ENCODE measurements at regions of chr19 and their contacts with region 1.

Region 1: GRCh38 chr19:4815426-4816201 is 15.9 kb downstream of the TICAM1 start:
- DNase-seq: no peak
- H3K4me3 ChIP-seq: no peak overlapping the region
- CTCF ChIP-seq: no peak

Region 2: DNA sequence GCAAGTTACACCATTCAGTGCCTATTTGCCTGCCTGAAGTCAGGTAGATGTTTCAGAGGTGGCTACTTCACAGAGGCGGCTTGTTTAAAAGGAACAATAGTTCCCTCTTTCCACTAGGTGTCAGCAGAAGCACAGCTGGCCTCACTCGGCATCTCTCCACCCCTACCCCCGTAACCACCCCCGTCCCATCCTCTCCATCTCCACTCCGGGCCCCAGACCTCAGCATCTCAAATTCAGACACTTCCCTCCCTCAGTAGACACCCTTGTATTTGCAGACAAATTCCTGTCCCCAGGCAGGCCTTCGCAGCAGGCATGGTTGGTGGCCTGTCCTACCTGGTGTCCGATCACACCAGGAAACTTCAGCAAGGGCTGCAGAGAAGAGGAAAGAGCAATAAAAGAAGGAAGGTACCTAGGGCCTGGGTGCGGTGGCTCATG is 82.9 kb before region 1 on chr19:
- CTCF ChIA-PET with region 1: interaction called, 37 read pairs
- POLR2A ChIA-PET with region 1: no interaction called
- DNase-seq: no peak
- H3K4me3 ChIP-seq: no peak overlapping the region; the same call in 1 of the 2 replicates
- CTCF ChIP-seq: peak; percentile 71

Region 3: DNA sequence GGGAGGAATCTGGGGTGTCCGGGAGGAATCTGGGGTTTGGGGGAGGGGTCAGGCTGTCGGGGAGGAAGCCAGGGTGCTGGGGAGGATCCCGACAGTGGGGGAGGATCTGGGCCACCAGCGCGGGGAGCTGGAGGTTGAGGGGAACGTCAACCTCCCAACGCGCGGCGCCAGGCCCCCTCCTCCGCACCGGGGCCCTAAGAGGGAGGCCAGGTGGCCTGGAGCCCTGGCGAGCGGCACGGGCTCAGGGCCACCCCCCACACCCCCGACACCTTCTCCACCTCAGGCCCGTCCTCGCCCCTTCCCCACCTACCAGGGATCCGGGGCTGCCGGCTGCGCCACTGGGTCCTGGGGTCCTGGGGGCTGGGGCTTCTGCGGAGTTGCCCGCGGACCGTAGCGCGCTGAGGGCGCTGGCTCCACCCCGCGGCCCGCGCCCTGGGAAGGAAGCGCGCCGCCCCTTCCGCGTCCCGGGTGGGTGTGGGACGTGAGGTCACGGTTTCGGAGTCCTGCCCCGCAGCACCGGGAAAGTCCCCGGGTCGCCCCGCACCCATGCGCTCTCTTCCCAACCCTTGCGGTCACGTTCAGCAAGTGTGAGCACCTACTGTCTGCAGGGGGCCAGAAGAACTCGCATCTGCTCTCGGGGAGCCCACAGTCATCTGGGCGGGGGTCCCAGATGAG is 15.8 kb after region 1 on chr19 and contains the start of gene TICAM1:
- CTCF ChIA-PET with region 1: interaction called, 23 read pairs
- POLR2A ChIA-PET with region 1: interaction called, 3 read pairs
- DNase-seq: no peak
- H3K4me3 ChIP-seq: peak within 1 kb of the TSS; percentile 76
- CTCF ChIP-seq: no peak

Region 4: DNA sequence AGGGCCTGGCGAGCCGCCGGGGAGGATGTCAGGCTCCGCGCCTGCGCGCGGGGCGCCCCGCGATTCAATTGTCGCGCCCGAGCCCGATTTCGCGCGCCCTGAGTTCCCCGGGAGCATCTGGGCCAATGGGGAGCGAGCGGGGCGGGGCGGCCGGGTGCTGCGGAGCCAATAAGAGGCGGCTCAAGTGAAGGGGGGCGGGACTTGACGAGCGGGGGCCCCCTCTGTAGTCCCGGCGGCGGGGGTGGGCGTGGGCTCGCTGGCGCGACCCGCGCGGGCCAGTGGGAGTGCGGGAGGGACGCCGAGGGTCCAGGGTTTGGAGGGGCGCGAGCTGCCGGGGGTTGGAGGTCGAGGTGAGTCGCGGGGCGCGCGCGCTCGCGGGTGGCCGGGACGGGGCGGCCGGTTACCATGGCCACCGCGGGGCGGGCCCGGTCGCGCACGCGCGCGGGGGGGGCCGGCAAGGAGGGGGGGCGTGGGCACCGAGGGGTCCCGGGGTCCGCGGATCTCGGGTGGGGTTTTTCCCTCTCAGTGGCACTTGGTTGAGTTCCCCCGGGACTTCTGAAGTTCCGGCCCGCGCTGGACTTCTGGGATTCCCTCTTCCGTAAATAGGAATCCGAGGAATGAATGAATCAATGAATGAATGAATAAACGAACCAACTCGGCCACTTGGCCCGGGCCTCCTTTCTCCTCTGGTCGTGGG is 94.4 kb after region 1 on chr19:
- CTCF ChIA-PET with region 1: interaction called, 243 read pairs
- POLR2A ChIA-PET with region 1: interaction called, 22 read pairs
- DNase-seq: no peak
- H3K4me3 ChIP-seq: peak overlapping the region; percentile 70
- CTCF ChIP-seq: no peak

Region 5: DNA sequence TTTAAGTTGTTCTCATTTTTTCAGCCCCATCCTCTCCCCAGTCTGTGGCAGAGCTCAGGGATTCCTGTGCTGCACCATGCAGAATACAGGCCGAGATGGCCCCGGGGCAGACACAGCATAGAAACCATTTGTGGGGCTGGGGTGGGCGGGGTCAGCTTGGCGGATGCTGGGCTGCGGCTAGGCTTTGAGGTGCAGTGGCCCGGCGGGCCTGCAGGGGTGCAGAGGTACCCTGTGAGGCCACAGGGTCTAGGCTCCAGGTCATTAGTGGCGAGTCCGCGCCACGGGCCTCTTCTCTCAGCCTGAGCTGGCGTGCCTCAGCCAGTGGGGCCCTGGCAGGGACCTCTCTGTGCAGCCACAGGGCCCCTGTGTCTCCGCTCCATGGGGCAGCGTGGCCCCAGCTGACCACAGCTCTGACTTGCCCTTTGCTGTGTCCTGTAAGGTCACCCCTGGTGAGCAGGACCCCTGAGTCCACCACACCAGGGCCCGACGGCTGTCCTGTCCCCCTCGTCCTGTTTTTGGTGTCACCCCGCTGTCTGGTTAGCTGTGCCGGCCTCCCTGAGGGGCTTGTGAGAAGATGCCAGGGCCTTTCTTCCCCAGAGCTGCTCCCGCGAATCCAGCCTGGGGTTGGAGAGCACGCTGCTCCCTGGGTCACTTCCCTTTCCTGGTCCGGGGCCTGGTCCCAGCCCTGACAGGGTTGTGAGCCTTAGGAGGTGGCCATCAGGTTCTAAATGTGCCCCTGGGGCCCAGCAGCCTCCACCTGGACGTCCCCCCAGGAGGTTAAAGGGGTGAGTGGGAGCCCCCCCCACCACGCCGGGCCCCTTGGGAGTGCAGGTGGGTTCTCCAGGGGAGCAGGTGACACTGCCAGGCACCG is 165.4 kb after region 1 on chr19:
- CTCF ChIA-PET with region 1: interaction called, 10 read pairs
- POLR2A ChIA-PET with region 1: no interaction called
- DNase-seq: no peak
- H3K4me3 ChIP-seq: no peak overlapping the region
- CTCF ChIP-seq: no peak

Region 6: DNA sequence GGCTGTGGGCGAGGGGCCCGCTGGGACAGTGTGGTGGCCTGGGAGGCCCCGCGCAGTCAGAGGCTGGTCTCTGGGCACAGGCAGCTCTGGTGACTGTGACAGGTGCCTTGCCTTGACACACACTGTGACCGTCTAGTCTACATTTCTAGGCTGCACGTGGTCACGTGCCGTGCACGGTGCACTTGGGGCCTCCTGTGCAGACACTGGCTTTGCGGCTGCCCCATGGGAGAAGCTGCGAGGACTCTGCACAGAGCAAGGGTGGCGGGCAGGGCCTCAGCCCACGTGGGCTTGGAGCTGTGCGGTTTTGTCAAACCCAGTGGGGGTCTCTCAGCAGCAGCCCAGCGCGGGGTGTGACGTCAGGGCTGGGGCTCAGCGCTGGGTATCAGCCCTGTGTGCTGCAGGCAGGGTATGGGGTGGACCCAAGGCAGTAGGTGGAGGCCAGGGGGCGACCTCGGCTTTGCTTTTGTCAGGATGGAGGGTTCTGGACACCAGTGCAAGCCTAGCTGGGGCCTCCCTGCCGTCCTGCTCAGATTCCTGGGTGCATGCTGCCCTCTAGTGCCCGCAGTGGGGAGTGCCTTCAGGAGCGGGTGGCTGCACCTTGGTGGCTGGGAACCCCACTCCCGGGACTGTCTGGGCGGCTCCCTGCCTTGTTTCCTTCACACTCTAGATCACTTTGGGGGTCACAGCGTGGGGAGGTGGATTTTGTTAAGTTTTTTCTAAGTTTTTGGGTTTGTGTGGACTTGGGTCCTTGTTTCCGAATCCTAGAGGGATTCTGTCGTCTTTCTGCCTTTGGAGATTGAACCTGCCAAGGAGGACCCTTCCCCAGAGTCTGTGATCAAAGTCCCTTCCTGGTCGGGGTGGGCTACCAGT is 215.9 kb after region 1 on chr19:
- CTCF ChIA-PET with region 1: interaction called, 246 read pairs
- POLR2A ChIA-PET with region 1: no interaction called
- DNase-seq: no peak
- H3K4me3 ChIP-seq: no peak overlapping the region
- CTCF ChIP-seq: peak; percentile 98

Region 7: GRCh38 chr19:5292822-5293611 is 477.4 kb after region 1 on chr19:
- CTCF ChIA-PET with region 1: no interaction called
- POLR2A ChIA-PET with region 1: no interaction called
- DNase-seq: no peak
- H3K4me3 ChIP-seq: peak overlapping the region; percentile 76
- CTCF ChIP-seq: no peak